ENCODE measurements at regions of chr11 and their contacts with region 1.

Region 1: GRCh38 chr11:65506770-65507505 is 8.1 kb downstream of the MALAT1 start:
- DNase-seq: peak; percentile 68
- ATAC-seq: peak; percentile 57
- H3K4me3 Mint-ChIP-seq: no peak overlapping the region
- H3K27ac Mint-ChIP-seq: peak overlapping the region; percentile 73
- H3K4me1 Mint-ChIP-seq: peaks cover 46% of the 10 kb centered on the region
- H3K27me3 Mint-ChIP-seq: no peaks in the 10 kb centered on the region
- CTCF ChIP-seq: no peak

Region 2: GRCh38 chr11:65382033-65382807 is 124.7 kb before region 1 on chr11 and contains the start of gene SLC25A45:
- CTCF ChIA-PET with region 1: interaction called, 30 read pairs
- POLR2A ChIA-PET with region 1: interaction called, 333 read pairs
- intact Hi-C with region 1: loop called (anchors 2 kb)
- DNase-seq: peak; percentile 96
- ATAC-seq: peak; percentile 85
- H3K4me3 Mint-ChIP-seq: peak within 1 kb of the TSS; percentile 78
- H3K27ac Mint-ChIP-seq: peak within 1 kb of the TSS; percentile 97
- H3K4me1 Mint-ChIP-seq: peaks cover 44% of the 10 kb centered on the region
- H3K27me3 Mint-ChIP-seq: no peaks in the 10 kb centered on the region
- CTCF ChIP-seq: peak; percentile 91
- total RNA-seq, gene SLC25A45: 12.8 to 14.4 TPM

Region 3: DNA sequence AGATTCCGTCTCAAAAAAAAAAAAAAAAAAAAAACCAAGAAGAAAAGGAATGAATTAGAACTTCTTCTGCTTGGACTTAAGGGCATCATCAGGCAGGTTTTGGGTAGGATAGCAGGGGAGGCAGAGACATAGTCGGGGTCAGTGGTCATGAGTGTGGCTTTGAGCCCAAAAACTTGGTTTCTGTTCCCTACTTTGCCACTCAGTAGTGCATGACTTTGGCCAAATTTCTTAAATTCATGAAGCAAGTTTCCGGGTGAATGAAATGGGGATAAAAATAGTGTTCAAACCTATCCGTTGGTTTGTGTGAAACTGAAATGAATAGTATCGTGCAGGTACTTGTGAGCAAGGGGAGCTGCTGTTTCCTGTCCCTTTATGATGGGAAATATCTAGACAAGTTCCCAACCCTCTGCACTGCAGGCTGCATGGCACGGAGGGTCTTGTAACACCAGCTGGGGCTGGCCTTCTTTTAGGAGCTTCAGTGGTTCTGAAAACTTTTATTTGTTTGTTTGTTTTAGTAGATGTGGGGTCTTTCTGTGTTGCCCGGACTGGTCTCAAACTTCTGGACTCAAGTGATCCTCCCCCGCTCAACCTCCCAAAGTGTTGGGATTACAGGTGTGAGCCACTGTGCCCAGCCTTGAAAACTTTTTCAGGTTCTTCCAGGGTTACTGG is 66.0 kb before region 1 on chr11:
- CTCF ChIA-PET with region 1: no interaction called
- POLR2A ChIA-PET with region 1: interaction called, 15 read pairs
- intact Hi-C with region 1: no loop called
- DNase-seq: no peak
- ATAC-seq: peak; percentile 25
- H3K4me3 Mint-ChIP-seq: peak overlapping the region; percentile 15
- H3K27ac Mint-ChIP-seq: peak overlapping the region; percentile 87
- H3K4me1 Mint-ChIP-seq: peaks cover 63% of the 10 kb centered on the region
- H3K27me3 Mint-ChIP-seq: no peaks in the 10 kb centered on the region
- CTCF ChIP-seq: no peak

Region 4: DNA sequence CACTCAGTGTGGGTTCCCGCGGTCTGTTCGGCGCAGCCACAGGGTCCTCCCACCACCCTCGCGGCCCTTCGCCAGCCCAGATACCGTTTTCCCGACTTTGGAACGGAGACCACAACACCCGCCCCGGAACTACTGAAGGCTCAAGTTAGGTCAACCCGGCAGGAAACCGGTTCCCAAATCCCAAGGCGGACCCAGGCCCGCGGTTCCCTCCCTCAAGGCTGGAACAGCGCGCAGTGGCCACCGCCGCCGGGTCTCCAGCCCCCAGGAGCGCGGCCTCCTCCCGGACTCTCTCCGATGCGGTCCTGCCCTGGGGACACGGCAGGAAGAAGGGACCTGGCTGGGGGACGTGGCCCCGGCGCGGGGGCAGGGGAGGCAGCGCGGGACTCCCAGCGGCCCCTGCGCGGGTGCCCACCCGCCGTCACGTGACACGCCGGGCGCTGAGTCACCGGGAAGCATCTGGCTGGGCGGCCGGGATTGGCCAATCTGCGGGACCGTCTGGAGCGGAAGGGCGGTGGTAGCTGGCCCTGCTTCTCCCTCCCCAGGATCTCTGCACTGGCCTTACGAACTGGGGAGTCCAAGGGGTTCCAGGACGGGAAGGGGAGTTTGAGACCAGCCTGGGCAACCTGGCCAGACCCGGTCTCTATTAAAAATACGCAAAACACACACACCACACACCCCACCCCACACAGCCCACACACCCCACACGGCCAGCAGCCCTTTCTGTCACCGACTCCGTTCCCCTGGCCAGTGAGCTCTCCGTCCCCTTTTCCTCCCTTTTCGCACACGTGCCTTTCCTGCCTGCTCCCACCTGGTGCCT is 29.6 kb before region 1 on chr11:
- CTCF ChIA-PET with region 1: interaction called, 13 read pairs
- POLR2A ChIA-PET with region 1: interaction called, 687 read pairs
- intact Hi-C with region 1: loop called (anchors 5 kb)
- DNase-seq: peak; percentile 94
- ATAC-seq: peak; percentile 85
- H3K4me3 Mint-ChIP-seq: peak overlapping the region; percentile 96
- H3K27ac Mint-ChIP-seq: peak overlapping the region; percentile 100
- H3K4me1 Mint-ChIP-seq: peaks cover 8% of the 10 kb centered on the region
- H3K27me3 Mint-ChIP-seq: no peaks in the 10 kb centered on the region
- CTCF ChIP-seq: no peak

Region 5: GRCh38 chr11:65615229-65615941 is 108.4 kb after region 1 on chr11 and contains the start of gene PCNX3:
- CTCF ChIA-PET with region 1: interaction called, 3 read pairs
- POLR2A ChIA-PET with region 1: interaction called, 10 read pairs
- intact Hi-C with region 1: no loop called
- DNase-seq: peak; percentile 100
- ATAC-seq: peak; percentile 90
- H3K4me3 Mint-ChIP-seq: peak within 1 kb of the TSS; percentile 93
- H3K27ac Mint-ChIP-seq: peak within 1 kb of the TSS; percentile 97
- H3K4me1 Mint-ChIP-seq: peaks cover 45% of the 10 kb centered on the region
- H3K27me3 Mint-ChIP-seq: no peaks in the 10 kb centered on the region
- CTCF ChIP-seq: no peak
- total RNA-seq, gene PCNX3: 34.3 to 34.4 TPM

Region 6: DNA sequence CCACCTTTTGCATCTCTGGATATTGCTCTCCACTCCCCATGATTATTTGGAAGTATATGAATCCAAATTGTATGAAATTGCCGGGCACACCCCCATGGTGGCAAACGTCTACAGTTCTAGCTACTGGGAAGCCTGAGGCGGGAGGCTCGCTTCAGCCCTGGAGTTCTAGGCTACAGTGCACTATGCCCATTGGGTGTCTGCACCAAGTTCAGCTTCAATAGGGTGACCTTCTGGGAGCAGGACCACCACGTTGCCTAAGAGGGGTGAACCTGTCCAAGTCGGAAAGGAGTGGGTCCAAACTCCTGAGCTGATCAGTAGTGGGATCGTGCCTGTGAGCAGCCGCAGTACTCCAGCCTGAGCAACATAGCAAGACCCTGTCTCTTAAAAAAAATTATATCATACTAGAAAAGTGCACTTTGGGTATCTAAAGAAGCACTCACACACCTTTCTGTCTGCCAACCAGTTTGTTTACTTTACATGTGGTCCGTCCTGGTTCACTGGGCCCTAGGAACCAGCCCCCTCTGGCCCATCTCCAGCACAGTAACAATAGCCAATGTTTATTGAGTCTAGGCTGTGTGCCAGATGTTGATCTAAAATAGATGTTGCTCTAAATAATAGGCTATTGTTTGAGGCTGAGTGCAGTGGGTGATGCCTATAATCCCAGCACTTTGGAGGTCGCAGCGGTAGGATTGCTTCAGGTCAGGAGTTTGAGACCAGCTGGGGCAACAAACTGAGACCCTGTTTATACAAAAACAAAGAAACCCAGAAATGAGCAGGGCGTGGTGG is 188.7 kb after region 1 on chr11:
- CTCF ChIA-PET with region 1: no interaction called
- POLR2A ChIA-PET with region 1: no interaction called
- intact Hi-C with region 1: no loop called
- DNase-seq: no peak
- ATAC-seq: no peak
- H3K4me3 Mint-ChIP-seq: no peak overlapping the region
- H3K27ac Mint-ChIP-seq: no peak overlapping the region
- H3K4me1 Mint-ChIP-seq: no peaks in the 10 kb centered on the region
- H3K27me3 Mint-ChIP-seq: no peaks in the 10 kb centered on the region
- CTCF ChIP-seq: no peak